Caco-2 (cell line): ENCODE measurements at regions of chr17 and their contacts with region 1.

Region 1: GRCh38 chr17:42120770-42121769 is at the start of gene KAT2A:
- DNase-seq: peak; percentile 84 to 87
- H3K4me3 ChIP-seq: peak within 1 kb of the TSS; percentile 76
- H3K4me3 Mint-ChIP-seq: peak within 1 kb of the TSS; percentile 59
- H3K27ac Mint-ChIP-seq: peak within 1 kb of the TSS; percentile 29
- H3K4me1 ChIP-seq: peaks cover 6% of the 10 kb centered on the region
- H3K4me1 Mint-ChIP-seq: no peaks in the 10 kb centered on the region
- H3K27me3 ChIP-seq: no peaks in the 10 kb centered on the region
- H3K27me3 Mint-ChIP-seq: no peaks in the 10 kb centered on the region
- CTCF ChIP-seq: no peak
- total RNA-seq, gene KAT2A: 46.5 and 56.2 TPM in 2 replicates

Region 2: DNA sequence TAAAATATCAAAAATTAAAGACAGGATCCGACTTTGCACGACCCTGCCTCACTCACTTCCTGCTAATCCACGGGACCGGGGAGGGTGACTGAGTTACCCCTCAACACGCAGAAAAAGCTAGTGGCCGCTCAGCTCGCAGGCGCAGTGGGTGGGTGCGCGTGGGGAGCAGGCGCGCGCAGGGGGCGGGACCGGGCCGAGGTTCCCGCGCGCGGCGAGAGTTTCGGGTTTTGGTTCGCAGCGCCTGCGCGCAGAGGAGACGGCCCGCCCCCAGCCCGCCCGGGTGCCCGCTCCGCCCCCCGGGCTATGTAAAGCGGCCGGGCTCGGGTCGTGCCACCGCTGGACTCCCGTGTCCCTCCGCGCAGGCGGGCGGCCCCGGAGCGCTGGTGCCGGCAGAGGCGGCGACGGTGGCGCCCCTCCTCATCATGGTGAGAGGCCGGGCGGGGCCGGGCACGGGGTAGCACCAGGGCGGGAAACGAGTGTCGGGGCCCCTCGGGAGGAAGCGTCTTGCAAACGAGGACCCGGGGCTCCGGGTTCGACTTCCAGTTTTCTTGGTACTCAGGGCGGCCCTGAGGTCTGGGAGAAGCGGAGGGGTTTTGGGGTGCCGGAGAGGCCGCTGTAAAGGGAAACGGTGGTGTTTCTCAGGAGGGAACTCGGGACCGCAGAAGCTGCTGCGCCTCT is 154.5 kb before region 1 on chr17 and contains the start of gene CNP:
- CTCF ChIA-PET with region 1: interaction called, 4 read pairs
- POLR2A ChIA-PET with region 1: no interaction called
- intact Hi-C with region 1: loop called (anchors 1 kb)
- DNase-seq: peak; percentile 92 to 96
- H3K4me3 ChIP-seq: peak within 1 kb of the TSS; percentile 83
- H3K4me3 Mint-ChIP-seq: peak within 1 kb of the TSS; percentile 79
- H3K27ac Mint-ChIP-seq: peak within 1 kb of the TSS; percentile 0
- H3K4me1 ChIP-seq: peaks cover 20% of the 10 kb centered on the region
- H3K4me1 Mint-ChIP-seq: peaks cover 23% of the 10 kb centered on the region
- H3K27me3 ChIP-seq: no peaks in the 10 kb centered on the region
- H3K27me3 Mint-ChIP-seq: no peaks in the 10 kb centered on the region
- CTCF ChIP-seq: no peak
- total RNA-seq, gene CNP: 90.1 and 94.5 TPM in 2 replicates

Region 3: DNA sequence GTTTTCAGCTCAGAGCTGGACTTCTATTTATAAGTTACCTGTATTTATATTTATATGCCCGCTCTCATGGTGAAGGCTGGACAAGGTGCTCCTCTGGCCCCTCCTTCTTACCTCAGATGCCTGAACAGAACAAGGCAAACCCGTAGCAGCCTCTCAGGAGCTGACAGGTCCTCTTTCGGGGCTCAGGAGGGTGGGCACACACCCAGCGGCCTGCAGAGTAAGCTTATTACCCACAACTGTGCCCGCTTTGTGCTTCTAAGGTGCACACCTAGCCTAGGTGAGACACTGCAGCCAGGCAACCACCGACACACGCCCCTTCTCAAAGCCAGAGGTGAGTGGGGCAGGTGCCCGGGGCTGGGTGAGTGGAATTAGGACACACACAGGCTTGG is 95.9 kb before region 1 on chr17:
- CTCF ChIA-PET with region 1: interaction called, 5 read pairs
- POLR2A ChIA-PET with region 1: interaction called, 7 read pairs
- intact Hi-C with region 1: loop called (anchors 1 kb)
- DNase-seq: no peak
- H3K4me3 ChIP-seq: no peak overlapping the region
- H3K4me3 Mint-ChIP-seq: peak overlapping the region; percentile 25
- H3K27ac Mint-ChIP-seq: peak overlapping the region; percentile 58
- H3K4me1 ChIP-seq: peaks cover 21% of the 10 kb centered on the region
- H3K4me1 Mint-ChIP-seq: peaks cover 28% of the 10 kb centered on the region
- H3K27me3 ChIP-seq: no peaks in the 10 kb centered on the region
- H3K27me3 Mint-ChIP-seq: no peaks in the 10 kb centered on the region
- CTCF ChIP-seq: no peak

Region 4: DNA sequence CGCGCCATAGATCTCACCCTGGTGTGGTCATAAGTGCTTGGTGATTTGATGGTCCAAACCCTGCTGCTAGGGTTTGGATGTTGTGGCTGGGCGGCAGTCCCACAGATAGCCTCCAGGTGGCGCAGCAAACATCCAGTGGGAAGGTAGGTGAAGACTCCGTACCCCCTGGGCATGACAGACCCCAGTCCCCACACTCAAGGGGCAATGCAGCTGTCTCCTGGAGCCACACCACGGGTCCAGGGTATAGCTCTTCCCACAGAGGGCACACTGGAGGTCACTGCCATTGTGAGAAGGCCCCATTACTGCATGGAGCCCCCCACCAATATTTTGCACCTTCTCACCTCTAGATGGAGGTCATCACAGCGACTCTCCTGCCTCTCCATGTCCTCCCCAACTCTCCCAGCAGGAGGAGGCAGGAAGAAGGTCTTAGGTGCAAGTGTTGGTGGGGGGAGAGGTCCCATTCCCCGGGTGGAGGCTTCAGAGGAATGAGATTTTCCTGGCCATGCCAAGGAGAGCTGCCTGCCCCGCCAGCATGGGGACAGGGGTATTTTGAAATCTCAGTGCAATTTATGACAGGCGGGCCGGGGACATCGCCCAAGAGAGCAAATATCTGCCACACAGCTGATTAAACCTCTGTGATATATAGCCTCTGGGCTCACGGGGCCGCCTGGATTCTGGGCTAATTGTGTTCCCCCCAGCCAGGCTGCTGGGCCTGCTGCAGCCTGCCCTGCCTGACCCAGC is 53.5 kb before region 1 on chr17:
- CTCF ChIA-PET with region 1: interaction called, 6 read pairs
- POLR2A ChIA-PET with region 1: no interaction called
- intact Hi-C with region 1: loop called (anchors 1 kb)
- DNase-seq: peak; percentile 74 to 82
- H3K4me3 ChIP-seq: no peak overlapping the region
- H3K4me3 Mint-ChIP-seq: no peak overlapping the region
- H3K27ac Mint-ChIP-seq: no peak overlapping the region
- H3K4me1 ChIP-seq: peaks cover 10% of the 10 kb centered on the region
- H3K4me1 Mint-ChIP-seq: no peaks in the 10 kb centered on the region
- H3K27me3 ChIP-seq: no peaks in the 10 kb centered on the region
- H3K27me3 Mint-ChIP-seq: peaks cover 3% of the 10 kb centered on the region
- CTCF ChIP-seq: peak; percentile 85 to 91

Region 5: DNA sequence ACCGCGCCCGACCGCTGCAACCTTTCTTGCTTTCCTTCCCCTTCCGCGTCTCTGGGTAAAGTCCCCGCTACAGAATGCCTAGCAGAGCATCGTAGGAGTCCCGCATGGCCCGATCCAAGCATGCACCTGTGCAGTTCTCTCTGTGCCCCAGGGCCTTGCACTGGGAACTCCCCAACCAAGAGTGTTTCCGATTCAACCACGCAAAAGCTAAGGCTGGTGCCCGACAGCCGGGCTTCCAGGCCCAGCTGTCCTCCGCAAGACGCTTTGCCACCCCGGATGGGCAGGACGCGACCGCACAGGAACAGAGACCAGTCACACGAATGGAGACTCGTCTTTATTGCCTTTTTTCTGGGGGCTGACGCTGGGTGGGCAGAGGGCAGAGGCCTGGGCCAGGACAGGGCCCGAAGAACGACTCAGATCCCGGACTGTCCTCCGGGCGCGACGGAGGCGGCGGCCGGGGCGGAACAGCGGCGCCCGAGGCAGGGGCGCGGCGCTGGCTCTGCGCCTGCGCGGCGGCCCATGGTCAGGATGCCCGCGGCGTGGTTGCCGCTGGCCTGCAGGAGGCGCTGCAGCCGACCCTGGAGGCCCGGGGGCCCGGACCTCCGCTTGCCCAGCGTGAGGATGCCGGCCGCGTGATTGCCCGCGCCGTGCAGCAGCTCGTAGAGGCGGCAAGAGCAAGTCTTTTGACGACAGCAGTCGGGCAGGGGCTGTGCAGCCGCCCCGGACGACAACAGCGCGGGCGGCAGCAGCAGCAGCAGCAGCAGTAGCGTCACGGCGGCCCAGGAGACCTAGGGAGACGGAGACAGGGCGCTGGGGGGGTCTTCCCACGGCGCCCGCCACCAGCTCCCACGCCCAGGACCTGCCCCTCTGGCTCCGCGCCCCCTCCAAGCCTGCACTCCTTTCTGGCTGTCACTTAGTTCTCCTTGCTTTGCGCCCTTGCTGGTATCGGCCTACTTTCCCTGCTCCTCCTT is 63.0 kb after region 1 on chr17:
- CTCF ChIA-PET with region 1: interaction called, 4 read pairs
- POLR2A ChIA-PET with region 1: no interaction called
- intact Hi-C with region 1: loop called (anchors 5 kb)
- DNase-seq: peak; percentile 67 to 89
- H3K4me3 ChIP-seq: peak overlapping the region; percentile 61
- H3K4me3 Mint-ChIP-seq: peak overlapping the region; percentile 77
- H3K27ac Mint-ChIP-seq: peak overlapping the region; percentile 84
- H3K4me1 ChIP-seq: peaks cover 20% of the 10 kb centered on the region
- H3K4me1 Mint-ChIP-seq: peaks cover 20% of the 10 kb centered on the region
- H3K27me3 ChIP-seq: no peaks in the 10 kb centered on the region; the same call in 1 of the 2 replicates
- H3K27me3 Mint-ChIP-seq: peaks cover 10% of the 10 kb centered on the region
- CTCF ChIP-seq: peak; percentile 74 to 81

Region 6: DNA sequence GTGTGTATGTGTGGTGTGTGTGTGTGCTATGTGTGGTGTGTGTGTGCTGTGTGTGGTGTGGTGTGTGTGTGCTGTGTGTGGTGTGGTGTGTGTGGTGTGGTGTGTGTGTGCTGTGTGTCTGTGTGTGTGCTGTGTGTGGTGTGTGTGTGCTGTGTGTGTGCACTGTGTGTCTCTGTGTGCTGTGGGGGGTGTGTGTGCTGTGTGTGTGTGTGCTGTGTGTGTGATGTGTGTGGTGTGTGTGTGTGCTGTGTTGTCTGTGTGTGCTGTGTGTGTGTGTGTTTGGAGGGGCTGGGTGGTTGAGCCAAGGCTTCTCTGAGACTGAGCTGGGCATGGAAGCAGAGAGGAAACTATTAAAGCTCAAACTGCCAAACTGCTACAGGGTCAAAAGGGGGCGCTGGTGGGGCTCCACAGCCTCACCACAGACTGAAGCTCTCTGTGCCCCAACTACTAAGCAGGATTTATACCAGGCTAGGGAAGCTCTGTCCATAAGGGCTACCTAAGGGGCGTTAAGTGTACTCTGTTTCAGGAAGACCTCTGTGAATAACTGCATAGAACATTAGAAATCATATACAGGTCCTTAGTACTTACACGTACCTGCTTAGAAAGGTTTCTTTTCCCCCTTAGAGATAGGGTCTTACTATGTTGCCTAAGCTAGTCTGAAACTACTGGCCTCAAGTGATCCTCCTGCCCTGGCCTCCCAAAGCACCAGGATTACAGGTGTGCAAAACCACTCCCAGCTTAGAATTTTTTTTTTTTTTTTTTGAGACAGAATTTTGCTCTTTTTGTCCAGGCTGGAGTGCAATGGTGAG is 101.1 kb after region 1 on chr17:
- CTCF ChIA-PET with region 1: no interaction called
- POLR2A ChIA-PET with region 1: no interaction called
- intact Hi-C with region 1: no loop called
- DNase-seq: peak in 1 of 2 experiments; percentile 44
- H3K4me3 ChIP-seq: no peak overlapping the region
- H3K4me3 Mint-ChIP-seq: no peak overlapping the region
- H3K27ac Mint-ChIP-seq: no peak overlapping the region
- H3K4me1 ChIP-seq: no peaks in the 10 kb centered on the region
- H3K4me1 Mint-ChIP-seq: no peaks in the 10 kb centered on the region
- H3K27me3 ChIP-seq: no peaks in the 10 kb centered on the region
- H3K27me3 Mint-ChIP-seq: no peaks in the 10 kb centered on the region
- CTCF ChIP-seq: peak; percentile 59 to 72

Region 7: DNA sequence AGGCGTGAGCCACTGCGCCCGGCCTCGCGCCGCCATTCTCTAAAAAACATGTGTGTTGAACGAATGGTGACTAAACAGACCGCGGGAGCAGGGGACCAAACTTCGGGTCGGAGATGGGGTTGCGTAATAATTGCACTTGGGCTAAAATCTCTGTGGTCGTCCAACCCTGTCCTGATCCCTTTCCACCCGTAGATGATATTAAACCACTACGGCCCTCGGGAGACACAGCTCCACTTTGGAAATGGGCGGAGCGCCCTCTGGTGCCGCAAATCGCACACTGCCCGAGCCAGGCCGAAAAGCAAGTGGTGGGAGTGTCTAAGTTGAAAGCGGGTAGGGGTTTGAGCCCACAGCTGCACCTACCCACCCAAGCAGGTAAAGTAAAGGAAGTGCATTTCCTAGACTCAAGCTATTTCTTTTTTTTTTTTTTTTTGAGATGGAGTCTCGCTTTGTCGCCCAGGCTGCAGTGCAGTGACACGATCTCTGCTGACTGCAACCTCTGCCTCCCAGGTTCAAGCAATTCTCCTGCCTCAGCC is 285.0 kb after region 1 on chr17:
- CTCF ChIA-PET with region 1: no interaction called
- POLR2A ChIA-PET with region 1: no interaction called
- intact Hi-C with region 1: loop called (anchors 2 kb)
- DNase-seq: peak; percentile 79 to 88
- H3K4me3 ChIP-seq: no peak overlapping the region
- H3K4me3 Mint-ChIP-seq: no peak overlapping the region
- H3K27ac Mint-ChIP-seq: no peak overlapping the region
- H3K4me1 ChIP-seq: peaks cover 19% of the 10 kb centered on the region
- H3K4me1 Mint-ChIP-seq: peaks cover 41% of the 10 kb centered on the region
- H3K27me3 ChIP-seq: no peaks in the 10 kb centered on the region
- H3K27me3 Mint-ChIP-seq: no peaks in the 10 kb centered on the region
- CTCF ChIP-seq: peak; percentile 86 to 93